Thyroid gland (tissue), 4 donors: ENCODE measurements at regions of chr2 and their contacts with region 1.

Region 1: DNA sequence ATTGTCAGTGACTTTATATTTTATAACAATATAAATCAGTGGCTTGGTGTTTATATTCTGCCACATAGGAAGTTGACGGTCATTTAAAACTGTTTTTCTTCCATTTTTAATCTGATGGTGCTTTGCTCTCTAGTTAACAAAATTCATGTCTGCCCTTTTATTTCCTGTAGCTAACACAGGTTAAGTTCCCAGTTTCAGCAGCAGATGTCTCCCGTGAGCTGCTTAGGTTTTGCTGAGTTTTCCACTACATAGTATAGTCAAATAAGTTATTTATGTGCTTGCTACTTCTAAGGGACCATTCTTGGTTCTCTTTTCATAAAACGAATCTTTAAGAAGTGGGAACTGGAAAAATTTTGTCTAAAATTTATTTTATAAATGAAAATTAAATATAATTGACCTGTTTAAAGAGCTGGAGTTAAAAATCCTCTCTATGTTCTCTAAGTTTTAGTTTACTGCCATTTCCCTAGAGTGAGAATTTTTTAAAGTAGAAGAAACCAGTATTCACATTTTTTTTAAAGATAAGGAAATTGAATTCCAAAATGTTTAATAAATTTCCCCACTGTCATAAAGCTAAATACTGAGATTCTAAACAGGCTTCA is 20.6 kb downstream of the HTR2B start:
- DNase-seq: peak; percentile 48 to 53
- H3K4me3 ChIP-seq: no peak overlapping the region
- H3K27ac ChIP-seq: no peak overlapping the region
- H3K4me1 ChIP-seq: no peaks in the 10 kb centered on the region
- H3K27me3 ChIP-seq: no peaks in the 10 kb centered on the region
- CTCF ChIP-seq: peak; percentile 49 to 90 (median 78)
- POLR2A ChIP-seq: no peak

Region 2: GRCh38 chr2:231191896-231192872 is 88.0 kb after region 1 on chr2:
- intact Hi-C with region 1: loop called (anchors 5 kb)
- DNase-seq: peak; percentile 30 to 39
- H3K4me3 ChIP-seq: no peak overlapping the region
- H3K27ac ChIP-seq: peak overlapping the region in 2 of 3 donors; percentile 42 to 96
- H3K4me1 ChIP-seq: peaks cover 8 to 24% of the 10 kb centered on the region in 2 donors
- H3K27me3 ChIP-seq: no peaks in the 10 kb centered on the region
- CTCF ChIP-seq: peak in 5 of 6 experiments; percentile 15 to 40 (median 26)
- POLR2A ChIP-seq: no peak

Region 3: GRCh38 chr2:231411831-231412617 is 307.8 kb after region 1 on chr2:
- intact Hi-C with region 1: loop called (anchors 5 kb)
- DNase-seq: peak; percentile 87 to 90
- H3K4me3 ChIP-seq: peak overlapping the region; percentile 48 to 67 (median 63)
- H3K27ac ChIP-seq: no peak overlapping the region
- H3K4me1 ChIP-seq: peaks cover 5 to 9% of the 10 kb centered on the region in 2 donors
- H3K27me3 ChIP-seq: no peaks in the 10 kb centered on the region
- CTCF ChIP-seq: peak; percentile 64 to 96 (median 80)
- POLR2A ChIP-seq: no peak